ENCODE measurements at regions of chr2 and their contacts with region 1.

Region 1: GRCh38 chr2:98736464-98736889 is 5.5 kb upstream of the MGAT4A start:
- DNase-seq: no peak
- H3K4me3 ChIP-seq: peak overlapping the region; percentile 16
- H3K4me3 Mint-ChIP-seq: peak overlapping the region in 6 of 7 donors; percentile 20 to 59 (median 52)
- H3K27ac ChIP-seq: no peak overlapping the region
- H3K27ac Mint-ChIP-seq: peak overlapping the region; percentile 1 to 91 (median 84)
- H3K4me1 ChIP-seq: peaks cover 64% of the 10 kb centered on the region
- H3K4me1 Mint-ChIP-seq: peaks cover 62 to 89% (median 69%) of the 10 kb centered on the region in 3 donors
- H3K27me3 ChIP-seq: no peaks in the 10 kb centered on the region
- H3K27me3 Mint-ChIP-seq: no peaks in the 10 kb centered on the region

Region 2: DNA sequence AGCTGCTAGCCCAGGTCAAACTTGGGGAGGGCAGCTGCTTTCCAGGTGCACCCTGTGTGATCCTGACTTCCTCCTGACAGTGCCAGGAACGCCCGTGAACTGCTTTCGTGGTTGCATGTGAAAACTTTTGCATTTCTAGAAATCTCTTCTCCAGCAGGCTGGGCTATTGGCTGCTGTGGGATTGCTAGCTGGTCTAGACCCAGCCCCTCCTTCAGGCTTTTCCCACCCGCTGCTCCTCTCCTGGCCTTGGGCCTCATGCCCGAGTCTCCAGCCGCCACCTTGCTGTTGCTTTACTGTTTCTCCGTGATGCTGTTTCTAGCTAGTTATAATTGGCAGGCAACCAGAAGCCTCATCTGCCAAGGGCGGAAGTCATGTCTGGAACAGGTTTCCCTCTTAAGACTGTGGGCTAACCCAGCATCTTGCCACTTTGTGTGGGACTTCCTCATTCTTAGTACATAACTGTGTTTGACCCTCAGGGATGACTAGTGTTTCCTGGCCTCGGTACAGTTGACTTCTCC is 21.5 kb after region 1 on chr2:
- CTCF ChIA-PET with region 1: interaction called, 19 read pairs
- POLR2A ChIA-PET with region 1: interaction called, 4 read pairs
- DNase-seq: peak; percentile 38 to 78 (median 66)
- H3K4me3 ChIP-seq: peak overlapping the region; percentile 51
- H3K4me3 Mint-ChIP-seq: peak overlapping the region; percentile 2 to 89 (median 79)
- H3K27ac ChIP-seq: peak overlapping the region; percentile 38
- H3K27ac Mint-ChIP-seq: peak overlapping the region; percentile 89 to 99 (median 96)
- H3K4me1 ChIP-seq: peaks cover 69% of the 10 kb centered on the region
- H3K4me1 Mint-ChIP-seq: peaks cover 54 to 89% (median 77%) of the 10 kb centered on the region in 3 donors
- H3K27me3 ChIP-seq: no peaks in the 10 kb centered on the region
- H3K27me3 Mint-ChIP-seq: no peaks in the 10 kb centered on the region

Measured in CD8-positive, alpha-beta memory T cell (primary cell).